ENCODE measurements at regions of chrX and their contacts with region 1.

Region 1: GRCh38 chrX:151753313-151754041 is 18.9 kb downstream of the CNGA2 start:
- DNase-seq: peak; percentile 70
- H3K4me3 Mint-ChIP-seq: peak overlapping the region; percentile 53
- H3K27ac Mint-ChIP-seq: peak overlapping the region; percentile 45
- H3K4me1 Mint-ChIP-seq: peaks cover 9% of the 10 kb centered on the region
- H3K27me3 Mint-ChIP-seq: peaks cover 75% of the 10 kb centered on the region
- CTCF ChIP-seq: peak; percentile 87

Region 2: GRCh38 chrX:151458824-151459223 is 294.7 kb before region 1 on chrX:
- CTCF ChIA-PET with region 1: no interaction called
- intact Hi-C with region 1: no loop called
- DNase-seq: no peak
- H3K4me3 Mint-ChIP-seq: no peak overlapping the region
- H3K27ac Mint-ChIP-seq: no peak overlapping the region
- H3K4me1 Mint-ChIP-seq: no peaks in the 10 kb centered on the region
- H3K27me3 Mint-ChIP-seq: no peaks in the 10 kb centered on the region
- CTCF ChIP-seq: no peak

Region 3: DNA sequence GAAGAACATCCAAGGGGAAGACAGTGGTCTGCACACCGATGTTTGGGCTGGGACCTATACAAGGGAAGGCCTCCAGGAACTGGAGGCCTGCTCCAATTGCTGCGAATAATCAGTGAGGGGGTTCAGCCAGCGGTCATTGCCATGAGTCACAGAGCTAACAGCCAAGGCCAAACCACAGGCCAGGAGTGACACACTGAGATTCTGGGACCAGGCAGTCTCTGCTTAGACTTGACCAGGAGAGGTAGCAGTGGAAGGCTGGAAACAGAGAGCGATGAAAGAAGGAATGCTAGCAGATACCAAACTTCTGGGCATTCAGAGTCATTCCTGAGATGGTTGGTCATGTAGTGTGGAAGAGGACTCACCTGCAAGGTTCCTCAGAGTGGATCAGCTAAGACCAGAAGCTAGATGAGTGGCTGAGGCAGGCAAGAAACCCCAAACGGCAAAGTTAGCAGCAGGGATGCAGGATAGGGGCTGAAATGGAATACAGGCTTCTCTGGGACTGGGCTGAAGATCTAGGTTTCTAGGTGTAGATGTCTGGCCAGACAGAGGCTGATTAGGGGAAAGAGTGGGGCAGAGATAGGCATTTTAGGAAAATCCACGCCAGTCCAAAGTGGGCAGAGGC is 35.8 kb after region 1 on chrX:
- CTCF ChIA-PET with region 1: interaction called, 5 read pairs
- intact Hi-C with region 1: loop called (anchors 2 kb)
- DNase-seq: peak; percentile 75
- H3K4me3 Mint-ChIP-seq: peak overlapping the region; percentile 34
- H3K27ac Mint-ChIP-seq: peak overlapping the region; percentile 22
- H3K4me1 Mint-ChIP-seq: peaks cover 24% of the 10 kb centered on the region
- H3K27me3 Mint-ChIP-seq: no peaks in the 10 kb centered on the region
- CTCF ChIP-seq: no peak

Region 4: DNA sequence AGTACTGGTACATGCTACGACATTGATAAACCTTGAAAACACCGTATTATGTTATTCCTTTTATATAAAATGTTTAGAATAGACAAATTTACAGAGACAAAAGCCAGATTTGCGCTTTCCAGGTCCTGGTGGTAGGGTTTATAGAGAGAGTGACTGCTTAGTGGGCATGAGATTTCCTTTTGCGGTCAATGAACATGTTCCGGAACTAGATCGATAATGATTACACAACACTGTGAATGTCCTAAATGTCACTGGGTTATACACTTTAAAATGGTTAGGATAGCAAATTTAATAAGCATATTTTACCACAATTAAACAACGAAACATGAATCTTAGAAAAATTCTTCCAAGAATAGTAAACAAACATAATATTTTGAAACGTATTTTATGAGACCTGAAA is 307.6 kb after region 1 on chrX:
- CTCF ChIA-PET with region 1: no interaction called
- intact Hi-C with region 1: loop called (anchors 10 kb)
- DNase-seq: no peak
- H3K4me3 Mint-ChIP-seq: no peak overlapping the region
- H3K27ac Mint-ChIP-seq: no peak overlapping the region
- H3K4me1 Mint-ChIP-seq: peaks cover 10% of the 10 kb centered on the region
- H3K27me3 Mint-ChIP-seq: no peaks in the 10 kb centered on the region
- CTCF ChIP-seq: no peak

Region 5: GRCh38 chrX:152343306-152343705 is 589.8 kb after region 1 on chrX:
- CTCF ChIA-PET with region 1: no interaction called
- intact Hi-C with region 1: loop called (anchors 2 kb)
- DNase-seq: no peak
- H3K4me3 Mint-ChIP-seq: no peak overlapping the region
- H3K27ac Mint-ChIP-seq: no peak overlapping the region
- H3K4me1 Mint-ChIP-seq: no peaks in the 10 kb centered on the region
- H3K27me3 Mint-ChIP-seq: no peaks in the 10 kb centered on the region
- CTCF ChIP-seq: no peak

Region 6: DNA sequence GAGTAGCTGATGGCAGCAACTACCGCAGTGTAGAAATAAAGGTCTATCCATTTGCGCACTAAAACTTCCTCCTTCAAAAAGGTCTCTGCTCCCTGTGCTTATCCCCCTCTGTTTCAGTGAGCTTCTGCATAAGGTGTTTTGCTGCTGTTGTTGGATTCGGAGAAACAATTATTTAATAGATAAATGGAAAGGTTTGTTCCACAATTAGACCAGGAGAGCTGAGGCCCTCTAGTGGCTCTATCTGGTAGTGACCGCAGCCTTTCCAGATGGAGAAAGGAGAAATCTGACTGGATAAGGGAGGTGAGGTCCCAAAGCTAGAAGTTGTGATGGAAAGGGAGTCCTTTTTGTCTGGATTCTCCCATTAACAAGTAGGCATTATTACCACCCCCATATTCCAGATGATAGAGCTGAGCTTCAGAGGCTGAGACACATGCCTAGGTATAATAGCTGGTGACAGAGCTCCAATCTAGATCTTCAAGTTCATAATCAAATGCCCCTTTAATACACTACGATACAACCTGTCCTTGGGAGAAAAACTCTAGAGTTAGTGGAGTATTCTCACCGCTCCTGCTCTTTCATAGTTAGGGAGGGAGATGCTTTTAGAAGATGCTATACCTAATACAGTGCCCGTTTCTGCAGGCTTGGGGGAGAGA is 879.1 kb after region 1 on chrX:
- CTCF ChIA-PET with region 1: interaction called, 25 read pairs
- intact Hi-C with region 1: loop called (anchors 1 kb)
- DNase-seq: peak; percentile 72
- H3K4me3 Mint-ChIP-seq: no peak overlapping the region
- H3K27ac Mint-ChIP-seq: no peak overlapping the region
- H3K4me1 Mint-ChIP-seq: no peaks in the 10 kb centered on the region
- H3K27me3 Mint-ChIP-seq: peaks cover 77% of the 10 kb centered on the region
- CTCF ChIP-seq: peak; percentile 75

Measured in Calu3 (cell line).